Astrocyte of the cerebellum (primary cell): ENCODE measurements at regions of chr12 and their contacts with region 1.

Region 1: GRCh38 chr12:95582230-95583058 is 31.2 kb upstream of the USP44 start:
- DNase-seq: peak; percentile 51
- H3K4me3 ChIP-seq: no peak overlapping the region
- CTCF ChIP-seq: peak; percentile 55

Region 2: GRCh38 chr12:95815635-95816212 is 233.3 kb after region 1 on chr12:
- in situ Hi-C with region 1: loop called (anchors 10 kb)
- DNase-seq: no peak
- H3K4me3 ChIP-seq: no peak overlapping the region
- CTCF ChIP-seq: peak; percentile 52